Sciatic nerve (tissue), 2 donors: ENCODE measurements at regions of chr6 and their contacts with region 1.

Region 1: DNA sequence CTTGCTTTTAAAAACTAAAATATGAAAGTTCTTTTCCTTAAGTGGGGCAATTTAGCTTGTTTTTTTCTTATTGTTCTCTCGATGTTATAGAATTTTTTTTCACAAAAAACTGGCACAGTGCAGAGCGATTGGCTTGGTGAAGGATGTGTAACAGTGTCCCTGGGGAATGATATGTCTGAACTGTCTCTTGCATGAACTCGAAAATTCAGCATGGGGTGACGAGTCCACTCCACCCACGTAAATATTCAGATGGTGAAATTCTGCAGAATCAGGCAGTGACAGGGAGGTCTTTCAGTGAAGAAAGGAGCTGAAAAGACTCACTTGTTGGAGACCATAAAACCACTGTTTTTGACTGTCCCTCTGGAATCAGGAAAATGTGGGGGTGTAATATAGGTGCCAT is 505.3 kb downstream of the MMUT start:
- DNase-seq: no peak
- ATAC-seq: no peak

Region 2: DNA sequence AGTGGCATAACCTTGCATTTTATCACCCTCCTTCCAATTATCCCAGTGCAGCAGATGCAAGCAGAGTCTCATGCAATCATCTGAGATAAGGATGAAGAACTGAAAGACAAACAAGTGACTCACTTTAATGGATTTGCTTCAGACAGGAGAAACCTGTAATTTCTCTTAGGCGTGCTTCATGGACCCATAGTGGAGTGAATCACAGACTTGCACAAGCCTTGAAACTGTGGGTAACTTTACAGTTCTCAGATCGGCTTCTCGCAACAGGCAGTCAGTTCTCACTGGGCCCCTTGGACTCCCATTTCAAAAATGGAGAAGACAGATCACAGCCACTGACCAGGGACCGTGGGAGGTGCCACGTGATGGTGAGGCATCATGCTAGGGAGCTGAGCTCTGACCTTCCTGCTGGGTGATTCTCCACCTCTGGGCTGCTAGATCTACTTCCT is 1259.4 kb before region 1 on chr6 and contains the start of gene ADGRF4:
- intact Hi-C with region 1: loop called (anchors 10 kb)
- DNase-seq: no peak
- ATAC-seq: no peak
- total RNA-seq, gene ADGRF4: not detected

Region 3: GRCh38 chr6:49030251-49031020 is 72.7 kb after region 1 on chr6:
- intact Hi-C with region 1: no loop called
- DNase-seq: no peak
- ATAC-seq: no peak